ENCODE measurements at regions of chr4 and their contacts with region 1.

Region 1: GRCh38 chr4:1192091-1192492 is 19.7 kb upstream of the SPON2 start:
- DNase-seq: peak; percentile 94
- H3K4me3 ChIP-seq: no peak overlapping the region
- H3K27ac ChIP-seq: peak overlapping the region; percentile 75
- H3K27me3 ChIP-seq: no peaks in the 10 kb centered on the region
- CTCF ChIP-seq: no peak

Region 2: DNA sequence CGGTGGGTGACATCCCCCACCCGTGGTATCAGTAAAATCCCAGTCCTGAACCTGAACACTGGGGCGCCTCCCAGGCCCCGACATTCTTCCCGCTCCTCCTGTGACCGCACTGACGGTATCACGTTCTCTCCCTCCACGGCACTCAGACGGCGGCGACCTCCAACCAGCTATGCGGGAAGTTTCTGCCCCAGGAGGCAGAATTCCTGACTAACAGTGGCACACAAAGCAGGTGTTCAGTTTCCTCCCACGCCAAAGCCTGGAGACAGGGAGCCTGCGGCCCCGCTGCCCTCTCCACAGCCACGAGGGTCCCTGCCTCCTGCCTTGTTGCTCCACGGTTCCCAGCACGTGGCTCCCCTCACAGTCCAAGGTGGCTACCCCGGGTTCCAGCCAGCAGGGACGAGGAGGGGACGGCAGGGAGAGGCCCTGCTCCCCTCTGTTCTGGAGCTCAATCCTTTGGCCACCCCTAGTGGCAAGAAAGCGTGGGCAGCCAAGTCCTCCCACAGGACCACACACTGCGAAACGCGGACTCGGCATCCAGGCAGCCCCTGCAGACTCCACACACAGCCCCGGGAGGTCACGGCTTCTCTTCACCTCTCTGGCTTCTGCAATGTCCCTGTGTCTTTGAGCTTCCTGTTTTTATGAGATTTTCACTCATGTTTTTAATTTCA is 41.7 kb after region 1 on chr4:
- in situ Hi-C with region 1: loop called (anchors 5 kb)
- DNase-seq: no peak
- H3K4me3 ChIP-seq: no peak overlapping the region
- H3K27ac ChIP-seq: no peak overlapping the region
- H3K27me3 ChIP-seq: no peaks in the 10 kb centered on the region
- CTCF ChIP-seq: peak; percentile 79

Measured in brain microvascular endothelial cell (primary cell).